AG04450 (cell line): ENCODE measurements at regions of chr7 and their contacts with region 1.

Region 1: DNA sequence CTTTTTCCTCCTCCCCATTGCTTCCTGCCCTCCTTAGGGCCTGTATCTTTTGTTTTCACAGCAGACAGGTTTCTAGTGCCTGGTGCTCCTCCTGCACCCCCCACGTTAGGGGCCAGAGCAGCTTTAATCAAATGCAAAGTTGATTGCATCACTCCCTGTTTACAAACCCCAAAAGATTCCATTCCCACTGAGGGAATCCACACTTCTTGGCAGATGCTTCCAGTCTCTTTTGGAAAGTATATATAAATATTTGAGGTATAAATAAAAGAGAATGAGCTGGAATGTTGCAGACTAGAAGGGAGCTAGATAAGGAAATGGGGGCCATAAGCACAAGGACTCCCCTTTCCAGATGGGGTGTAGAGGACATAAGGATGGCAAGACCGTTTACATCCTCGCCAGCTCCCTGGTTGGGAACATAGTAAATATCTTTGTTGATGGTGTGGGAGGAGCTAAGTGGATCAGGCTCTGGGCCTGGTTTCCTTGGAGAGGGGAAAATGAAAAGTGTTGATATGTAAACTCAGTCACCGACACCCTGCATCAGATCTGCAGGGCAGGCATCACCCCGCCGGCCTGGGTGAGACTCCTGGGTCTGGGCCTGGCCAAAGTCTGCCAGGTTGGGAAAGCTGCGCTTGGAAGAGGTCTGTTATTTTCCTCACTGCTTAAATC is 6.2 kb downstream of the RARRES2 start:
- DNase-seq: peak; percentile 83
- H3K4me3 ChIP-seq: no peak overlapping the region
- H3K27ac ChIP-seq: peak overlapping the region; percentile 77
- H3K27me3 ChIP-seq: peaks cover 4% of the 10 kb centered on the region
- CTCF ChIP-seq: no peak

Region 2: GRCh38 chr7:149872419-149873073 is 462.7 kb before region 1 on chr7:
- CTCF ChIA-PET with region 1: no interaction called
- POLR2A ChIA-PET with region 1: no interaction called
- DNase-seq: no peak
- H3K4me3 ChIP-seq: peak overlapping the region; percentile 78
- H3K27ac ChIP-seq: peak overlapping the region; percentile 75
- H3K27me3 ChIP-seq: no peaks in the 10 kb centered on the region
- CTCF ChIP-seq: peak; percentile 42

Region 3: DNA sequence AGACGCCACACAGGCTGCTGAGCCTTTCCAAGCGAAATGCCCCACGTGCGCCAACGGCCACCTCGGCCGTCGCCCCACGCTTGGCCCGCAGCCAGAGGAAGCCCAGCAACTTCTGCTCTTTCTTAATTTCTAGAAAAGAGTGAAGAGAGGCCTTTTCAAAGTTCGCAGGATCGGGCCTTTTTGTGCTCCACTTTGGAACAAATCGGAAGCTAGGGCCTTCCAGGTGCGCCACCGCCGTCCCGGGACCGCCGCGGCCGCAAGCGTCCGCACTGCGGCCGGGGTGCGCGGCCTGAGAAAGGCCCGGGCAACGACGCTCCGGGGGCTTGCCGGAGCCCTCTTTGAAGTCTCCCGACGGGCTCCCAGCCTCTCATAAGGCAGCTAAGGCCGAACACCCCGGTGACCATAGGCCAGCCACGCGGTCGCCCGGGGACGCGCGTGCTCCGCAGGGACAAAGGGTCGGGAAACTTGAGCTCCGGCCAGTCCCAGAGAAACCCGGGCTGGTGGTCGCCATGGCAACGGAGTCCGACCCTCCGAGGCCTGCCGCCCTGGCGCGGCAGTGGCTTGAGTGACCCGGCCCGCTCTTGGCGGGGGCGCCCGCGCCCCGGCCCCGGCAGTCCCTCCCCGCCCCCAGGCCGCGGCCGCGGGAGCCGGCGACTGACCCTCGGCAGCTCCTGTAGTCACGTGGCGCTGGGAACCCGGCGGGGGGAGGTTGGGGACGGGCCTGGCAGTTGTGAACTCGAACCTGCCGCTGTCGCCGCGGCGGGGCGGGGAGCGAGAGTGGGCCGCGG is 33.0 kb after region 1 on chr7 and contains the start of gene REPIN1:
- CTCF ChIA-PET with region 1: no interaction called
- POLR2A ChIA-PET with region 1: interaction called, 10 read pairs
- DNase-seq: peak; percentile 41
- H3K4me3 ChIP-seq: peak within 1 kb of the TSS; percentile 89
- H3K27ac ChIP-seq: peak within 1 kb of the TSS; percentile 83
- H3K27me3 ChIP-seq: no peaks in the 10 kb centered on the region
- CTCF ChIP-seq: no peak
- polyA plus RNA-seq, gene REPIN1: 28.4 and 38.3 TPM in 2 replicates

Region 4: GRCh38 chr7:150753826-150754603 is 418.8 kb after region 1 on chr7:
- CTCF ChIA-PET with region 1: no interaction called
- POLR2A ChIA-PET with region 1: no interaction called
- DNase-seq: no peak
- H3K4me3 ChIP-seq: no peak overlapping the region
- H3K27ac ChIP-seq: no peak overlapping the region
- H3K27me3 ChIP-seq: no peaks in the 10 kb centered on the region
- CTCF ChIP-seq: no peak